Activated naive CD8-positive, alpha-beta T cell treated with anti-CD3 and anti-CD28 coated beads, Interleukin-2, amount 10 ng/mL, durations not matched to agents 7 days and 5 days (primary cell): ENCODE measurements at regions of chr12 and their contacts with region 1.

Region 1: GRCh38 chr12:48105862-48106680 is at the start of gene SENP1:
- DNase-seq: peak; percentile 91
- ATAC-seq: peak; percentile 79
- H3K4me3 Mint-ChIP-seq: peak within 1 kb of the TSS; percentile 97
- H3K27ac Mint-ChIP-seq: peak within 1 kb of the TSS; percentile 86
- H3K4me1 Mint-ChIP-seq: peaks cover 43% of the 10 kb centered on the region
- H3K27me3 Mint-ChIP-seq: no peaks in the 10 kb centered on the region
- total RNA-seq, gene SENP1: 36.2 to 43.4 TPM

Region 2: DNA sequence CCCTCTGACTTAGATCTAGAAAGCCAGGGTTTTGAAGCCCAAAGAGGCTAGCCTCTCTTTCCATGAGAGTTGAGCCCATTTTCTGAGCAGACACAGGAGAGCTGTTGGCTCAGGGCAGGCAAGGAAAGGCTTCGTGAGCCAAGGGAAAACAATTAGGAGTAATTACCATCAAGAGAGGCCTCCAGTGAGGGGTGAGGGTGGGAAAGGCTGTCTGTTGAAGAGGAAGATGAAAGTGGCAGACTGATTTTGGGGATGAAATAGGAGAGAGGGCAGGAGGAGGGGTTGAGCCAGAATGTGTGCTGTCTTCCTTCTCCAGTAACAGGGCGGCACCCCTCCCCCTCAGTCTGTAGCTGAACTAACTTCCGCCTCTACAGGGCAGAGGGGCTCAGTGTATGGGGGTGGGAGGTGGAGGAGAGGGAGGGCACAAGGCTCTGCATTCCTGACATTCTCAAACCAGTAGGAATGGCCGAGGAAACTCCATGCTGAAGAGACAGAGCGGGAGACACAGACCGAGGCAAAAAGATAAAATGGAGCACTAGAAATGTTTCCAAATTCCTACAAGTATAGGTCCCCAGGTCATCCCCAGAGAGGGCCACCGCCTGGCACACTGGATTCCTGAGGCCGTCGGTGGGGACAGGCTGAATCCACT is 68.7 kb before region 1 on chr12:
- POLR2A ChIA-PET with region 1: no interaction called
- DNase-seq: no peak
- ATAC-seq: no peak
- H3K4me3 Mint-ChIP-seq: no peak overlapping the region
- H3K27ac Mint-ChIP-seq: no peak overlapping the region
- H3K4me1 Mint-ChIP-seq: peaks cover 5% of the 10 kb centered on the region
- H3K27me3 Mint-ChIP-seq: peaks cover 3% of the 10 kb centered on the region

Region 3: DNA sequence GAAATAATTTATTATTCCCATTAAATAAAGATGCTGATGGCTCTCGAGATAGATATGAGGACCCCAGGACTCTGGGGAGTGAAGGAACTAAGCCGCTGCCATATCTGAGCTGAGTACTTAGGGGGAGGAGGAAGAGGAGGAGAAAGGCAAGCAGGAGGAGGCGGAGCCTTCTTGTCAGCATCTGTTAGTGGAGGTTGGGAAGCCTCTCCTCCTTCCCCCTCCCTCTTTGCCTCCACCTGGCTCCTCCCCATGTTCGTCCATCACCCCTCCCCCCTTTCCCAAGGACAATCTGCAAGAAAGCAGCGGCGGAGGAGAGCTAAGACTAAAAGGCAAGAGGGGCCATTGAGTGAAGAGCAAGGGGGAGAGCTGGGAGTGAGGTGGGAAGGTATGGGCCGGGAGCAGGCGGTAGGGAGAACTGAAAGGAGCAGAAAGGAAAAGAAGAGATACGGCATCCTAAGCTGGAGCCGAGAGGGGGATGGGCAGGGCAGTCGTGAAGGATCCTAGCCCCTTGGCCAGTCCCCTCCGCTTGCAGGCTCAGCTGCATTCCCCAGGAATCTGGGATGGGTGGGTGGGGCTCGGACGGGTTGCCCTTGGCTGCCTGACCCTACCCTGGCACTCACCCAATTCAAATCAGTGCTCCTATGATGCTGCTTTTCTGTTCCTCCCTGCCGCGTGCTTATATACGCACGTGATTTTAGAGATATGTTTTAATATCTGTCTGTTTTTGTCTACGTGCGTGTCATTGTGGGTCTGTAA is 13.2 kb after region 1 on chr12 and contains the start of gene PFKM:
- POLR2A ChIA-PET with region 1: interaction called, 11 read pairs
- DNase-seq: peak; percentile 63
- ATAC-seq: peak; percentile 100
- H3K4me3 Mint-ChIP-seq: peak within 1 kb of the TSS; percentile 100
- H3K27ac Mint-ChIP-seq: peak within 1 kb of the TSS; percentile 92
- H3K4me1 Mint-ChIP-seq: peaks cover 23% of the 10 kb centered on the region
- H3K27me3 Mint-ChIP-seq: peaks cover 18% of the 10 kb centered on the region
- total RNA-seq, gene PFKM: 23.9 to 26.2 TPM

Region 4: GRCh38 chr12:48157018-48157888 is 51.2 kb after region 1 on chr12 and contains the start of gene ASB8:
- POLR2A ChIA-PET with region 1: interaction called, 41 read pairs
- DNase-seq: peak; percentile 97
- ATAC-seq: peak; percentile 98
- H3K4me3 Mint-ChIP-seq: peak within 1 kb of the TSS; percentile 96
- H3K27ac Mint-ChIP-seq: peak within 1 kb of the TSS; percentile 95
- H3K4me1 Mint-ChIP-seq: peaks cover 30% of the 10 kb centered on the region
- H3K27me3 Mint-ChIP-seq: no peaks in the 10 kb centered on the region
- total RNA-seq, gene ASB8: 47.6 to 53.9 TPM